ENCODE measurements at regions of chr10 and their contacts with region 1.

Region 1: GRCh38 chr10:110883924-110884323 is 12.2 kb downstream of the PDCD4 start:
- DNase-seq: no peak
- ATAC-seq: no peak
- H3K4me3 ChIP-seq: no peak overlapping the region
- H3K27ac ChIP-seq: no peak overlapping the region
- H3K4me1 ChIP-seq: peaks cover 0 to 7% of the 10 kb centered on the region in 2 donors
- H3K27me3 ChIP-seq: no peaks in the 10 kb centered on the region
- CTCF ChIP-seq: no peak
- POLR2A ChIP-seq: no peak

Region 2: GRCh38 chr10:110600487-110601101 is 283.3 kb before region 1 on chr10:
- in situ Hi-C with region 1: loop called in 3 of 4 experiments (anchors 10 to 25 kb)
- intact Hi-C with region 1: loop called (anchors 10 kb)
- DNase-seq: no peak
- ATAC-seq: no peak
- H3K4me3 ChIP-seq: no peak overlapping the region
- H3K27ac ChIP-seq: no peak overlapping the region
- H3K4me1 ChIP-seq: no peaks in the 10 kb centered on the region
- H3K27me3 ChIP-seq: no peaks in the 10 kb centered on the region
- CTCF ChIP-seq: no peak
- POLR2A ChIP-seq: no peak